ENCODE measurements at regions of chr4 and their contacts with region 1.

Region 1: DNA sequence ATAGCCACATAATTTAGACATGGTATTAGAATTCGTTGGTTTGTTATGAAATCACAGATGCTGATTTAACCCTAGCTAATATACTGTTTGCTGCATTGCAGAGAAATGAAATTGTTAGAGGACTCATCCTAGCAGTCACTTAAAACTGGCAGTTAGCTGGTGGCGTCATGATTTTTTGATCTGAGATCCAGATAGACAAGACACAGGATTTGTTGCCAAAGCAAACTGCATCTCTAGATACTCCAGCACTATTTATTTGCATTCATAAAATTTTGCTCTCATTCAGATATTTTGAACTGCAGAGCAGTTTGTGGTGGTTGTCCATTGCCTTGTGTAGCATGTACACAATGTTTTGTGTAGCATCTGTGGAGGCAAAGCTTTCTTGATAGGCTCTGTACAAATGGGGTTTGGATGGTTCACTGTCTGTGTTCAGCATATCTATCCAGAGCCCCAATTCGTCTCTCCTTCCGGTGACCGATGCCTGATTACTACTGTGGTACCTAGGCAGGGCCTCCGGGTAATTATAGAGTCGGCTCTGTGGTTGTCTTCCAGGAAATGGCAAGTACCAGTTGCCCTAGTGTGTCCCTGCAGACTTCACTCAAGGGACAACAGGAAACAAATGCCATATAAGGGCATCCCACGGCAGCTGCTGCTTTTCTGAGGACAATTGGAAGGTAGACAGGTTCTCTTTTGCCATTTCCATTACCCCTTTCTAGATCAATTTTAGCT is 30.1 kb upstream of the SPARCL1 start:
- DNase-seq: no peak
- ATAC-seq: peak; percentile 19
- H3K4me3 ChIP-seq: no peak overlapping the region
- H3K27ac ChIP-seq: no peak overlapping the region
- H3K4me1 ChIP-seq: peaks cover 2% of the 10 kb centered on the region in 2 donors
- H3K27me3 ChIP-seq: no peaks in the 10 kb centered on the region

Region 2: GRCh38 chr4:86461849-86462248 is 1097.4 kb before region 1 on chr4:
- intact Hi-C with region 1: no loop called
- DNase-seq: peak in 1 of 2 donors; percentile 49
- ATAC-seq: no peak
- H3K4me3 ChIP-seq: no peak overlapping the region
- H3K27ac ChIP-seq: no peak overlapping the region
- H3K4me1 ChIP-seq: no peaks in the 10 kb centered on the region
- H3K27me3 ChIP-seq: no peaks in the 10 kb centered on the region

Region 3: DNA sequence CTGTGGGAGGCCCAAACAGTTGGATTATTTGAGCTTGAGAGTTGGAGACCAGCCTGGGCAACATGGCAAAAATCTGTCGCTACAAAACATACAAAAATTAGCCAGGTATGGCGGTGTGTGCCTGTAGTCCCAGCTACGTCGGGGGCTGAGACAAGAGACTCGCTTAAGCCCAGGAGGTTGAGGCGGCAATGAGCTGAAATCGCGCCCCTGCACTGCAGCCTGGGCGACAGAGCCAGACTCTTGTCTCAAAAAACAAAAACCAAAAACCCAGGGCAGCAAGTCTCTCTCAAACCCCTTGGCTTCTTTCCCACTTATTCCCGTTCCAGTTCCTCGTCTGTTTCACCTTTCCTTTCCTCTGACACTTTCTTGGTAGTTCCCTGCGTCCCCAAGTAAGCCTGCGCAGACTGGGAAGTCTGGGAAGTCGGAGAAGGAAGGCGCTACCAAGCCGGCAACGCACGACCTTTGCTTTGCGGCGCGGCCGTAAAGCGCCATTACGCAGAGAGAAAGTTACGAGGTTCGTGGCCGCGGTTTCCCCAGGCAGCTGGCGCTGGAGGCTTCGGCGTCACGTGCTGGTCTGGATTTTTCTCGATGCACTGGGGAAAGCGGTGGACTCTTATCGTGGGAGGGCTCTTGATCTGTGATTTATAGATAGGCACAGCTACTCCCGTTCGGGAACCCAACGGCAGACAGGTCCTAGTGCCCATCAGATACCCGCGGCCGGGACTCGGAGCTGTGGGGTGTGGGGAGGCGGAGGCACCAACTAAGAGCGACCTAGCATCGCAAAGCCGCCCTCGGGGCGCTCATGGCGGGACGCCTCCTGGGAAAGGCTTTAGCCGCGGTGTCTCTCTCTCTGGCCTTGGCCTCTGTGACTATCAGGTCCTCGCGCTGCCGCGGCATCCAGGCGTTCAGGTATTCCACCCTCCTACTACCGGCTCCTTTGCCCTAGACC is 136.9 kb before region 1 on chr4 and contains the start of gene NUDT9:
- intact Hi-C with region 1: no loop called
- DNase-seq: peak; percentile 97 to 99
- ATAC-seq: peak; percentile 97
- H3K4me3 ChIP-seq: peak within 1 kb of the TSS; percentile 42 to 52
- H3K27ac ChIP-seq: peak within 1 kb of the TSS; percentile 29 to 90
- H3K4me1 ChIP-seq: peaks cover 1 to 3% of the 10 kb centered on the region in 2 donors
- H3K27me3 ChIP-seq: no peaks in the 10 kb centered on the region
- total RNA-seq, gene NUDT9: 22.2 to 29.1 TPM

Region 4: GRCh38 chr4:87624698-87625097 is 65.4 kb after region 1 on chr4:
- intact Hi-C with region 1: loop called (anchors 5 kb)
- DNase-seq: no peak
- ATAC-seq: no peak
- H3K4me3 ChIP-seq: no peak overlapping the region
- H3K27ac ChIP-seq: no peak overlapping the region
- H3K4me1 ChIP-seq: peaks cover 0 to 6% of the 10 kb centered on the region in 2 donors
- H3K27me3 ChIP-seq: no peaks in the 10 kb centered on the region

Region 5: GRCh38 chr4:87745064-87745807 is 186.0 kb after region 1 on chr4:
- intact Hi-C with region 1: no loop called
- DNase-seq: peak in 1 of 2 donors; percentile 47
- ATAC-seq: no peak
- H3K4me3 ChIP-seq: no peak overlapping the region
- H3K27ac ChIP-seq: no peak overlapping the region
- H3K4me1 ChIP-seq: no peaks in the 10 kb centered on the region
- H3K27me3 ChIP-seq: no peaks in the 10 kb centered on the region

Region 6: DNA sequence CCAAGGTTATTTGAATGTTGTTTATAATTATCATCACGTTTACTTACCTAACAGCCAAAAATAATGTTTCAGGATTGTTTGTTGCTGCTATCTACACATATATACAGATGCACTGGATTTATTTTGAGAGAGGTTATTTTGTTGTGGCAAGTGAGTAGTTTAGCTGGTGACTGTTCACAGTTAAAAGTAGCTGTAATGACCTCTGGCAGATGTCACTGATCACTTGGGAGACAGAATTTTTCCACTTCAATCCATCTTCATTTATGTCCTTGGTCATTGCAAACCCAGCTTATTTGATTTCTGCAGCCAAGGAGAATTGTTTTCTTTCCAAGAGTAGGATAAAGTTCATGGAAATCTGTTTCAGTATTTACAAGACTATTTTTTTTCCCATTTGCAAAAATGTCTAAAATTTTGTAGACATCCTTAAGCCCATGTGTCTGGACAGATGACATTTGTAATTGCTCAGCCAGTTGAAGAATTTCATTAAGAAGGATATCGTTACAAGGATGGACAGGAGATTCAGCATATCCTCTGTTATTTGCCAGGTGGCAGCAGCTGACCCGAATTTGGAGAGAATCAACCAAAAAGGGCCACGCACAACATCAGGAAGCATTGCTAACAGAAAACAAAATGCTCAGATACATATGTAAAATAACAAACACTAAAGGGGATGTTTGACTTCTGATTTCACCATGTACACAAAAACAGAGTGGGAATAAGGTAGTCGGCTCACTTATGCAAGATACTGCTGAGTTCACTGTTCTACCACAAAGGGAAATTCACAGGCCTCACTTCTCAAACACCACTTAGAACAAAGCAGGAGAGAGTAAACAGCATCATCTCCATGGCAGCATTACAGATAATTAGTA is 1683.8 kb after region 1 on chr4:
- intact Hi-C with region 1: no loop called
- DNase-seq: no peak
- ATAC-seq: no peak
- H3K4me3 ChIP-seq: no peak overlapping the region
- H3K27ac ChIP-seq: no peak overlapping the region
- H3K4me1 ChIP-seq: no peaks in the 10 kb centered on the region
- H3K27me3 ChIP-seq: no peaks in the 10 kb centered on the region